ENCODE measurements at regions of chr6 and their contacts with region 1.

Region 1: DNA sequence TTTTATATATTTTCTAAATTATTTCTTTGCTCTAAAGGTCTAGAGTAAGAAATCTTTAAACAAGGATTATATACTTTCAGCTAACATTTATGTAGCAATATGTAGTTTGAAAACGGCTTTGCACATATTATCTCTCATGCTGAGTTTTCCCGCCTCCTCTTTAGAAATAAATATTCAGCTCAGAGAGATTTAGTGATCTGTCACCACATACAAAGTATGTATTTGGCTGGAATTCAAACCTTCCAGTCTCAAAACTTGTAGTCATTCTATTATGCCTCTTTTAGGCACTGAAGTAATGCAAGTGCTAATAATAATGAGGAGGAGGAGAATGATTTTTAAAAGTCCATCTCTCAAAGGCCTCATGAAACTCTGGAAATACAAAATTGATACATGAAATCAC is 525.0 kb downstream of the GRIK2 start:
- DNase-seq: no peak

Region 2: GRCh38 chr6:101509536-101509935 is 408.9 kb before region 1 on chr6:
- intact Hi-C with region 1: no loop called
- DNase-seq: no peak

Region 3: GRCh38 chr6:101940391-101940790 is 21.9 kb after region 1 on chr6:
- intact Hi-C with region 1: loop called in 1 of 2 experiments (anchors 2 kb)
- DNase-seq: no peak

Region 4: GRCh38 chr6:101956961-101957360 is 38.5 kb after region 1 on chr6:
- intact Hi-C with region 1: no loop called
- DNase-seq: no peak